A673 (cell line): ENCODE measurements at regions of chr2 and their contacts with region 1.

Region 1: GRCh38 chr2:176001916-176002687 is at the start of gene LNPK:
- DNase-seq: peak; percentile 95
- H3K4me3 ChIP-seq: peak within 1 kb of the TSS; percentile 67
- H3K27ac ChIP-seq: peak within 1 kb of the TSS; percentile 57
- H3K4me1 ChIP-seq: peaks cover 7% of the 10 kb centered on the region
- H3K27me3 ChIP-seq: no peaks in the 10 kb centered on the region
- CTCF ChIP-seq: no peak
- total RNA-seq, gene LNPK: 42.5 and 46.6 TPM in 2 replicates

Region 2: DNA sequence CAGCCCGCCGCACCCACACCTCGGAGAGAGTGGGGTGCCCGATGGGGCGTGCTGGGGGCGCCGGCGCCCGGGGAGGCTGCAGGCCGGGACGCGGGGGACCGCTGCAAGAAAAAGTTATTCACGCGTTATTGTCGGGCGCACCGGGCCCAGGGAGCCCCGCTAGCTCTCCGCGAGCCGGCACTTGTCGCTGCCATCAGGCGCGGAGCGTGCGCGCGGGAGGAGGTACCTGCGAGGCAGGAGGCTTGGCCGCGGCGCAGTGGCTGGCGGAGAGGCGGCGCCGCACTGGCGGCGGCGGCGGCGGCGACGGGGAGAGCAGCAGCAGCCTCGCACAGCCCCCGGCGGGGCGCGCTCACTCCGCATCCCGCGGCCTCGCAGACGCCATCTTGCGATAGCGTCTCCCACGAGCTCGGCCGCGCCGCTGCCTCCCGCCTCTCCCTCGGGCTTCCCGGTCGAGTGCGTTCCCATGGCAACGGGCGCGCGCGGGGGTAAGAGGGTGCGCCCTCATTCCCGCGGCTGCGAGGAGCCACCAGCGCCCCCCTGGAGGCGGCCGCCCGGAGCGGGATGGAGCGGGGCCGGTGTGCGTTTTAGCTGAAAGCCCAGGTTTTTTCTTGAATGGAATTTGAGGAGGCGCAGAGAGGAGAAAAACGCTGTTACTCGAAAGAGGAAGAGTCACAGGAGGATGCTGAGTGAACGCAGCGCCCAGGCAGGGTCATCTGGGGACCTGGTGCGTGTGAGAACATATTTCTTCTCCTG is 996.9 kb before region 1 on chr2 and contains the start of gene CHN1:
- CTCF ChIA-PET with region 1: no interaction called
- POLR2A ChIA-PET with region 1: interaction called, 11 read pairs
- intact Hi-C with region 1: no loop called
- DNase-seq: peak; percentile 83
- H3K4me3 ChIP-seq: peak within 1 kb of the TSS; percentile 46
- H3K27ac ChIP-seq: no peak within 1 kb of the TSS
- H3K4me1 ChIP-seq: peaks cover 1% of the 10 kb centered on the region
- H3K27me3 ChIP-seq: peaks cover 67% of the 10 kb centered on the region
- CTCF ChIP-seq: no peak
- total RNA-seq, gene CHN1: 11.3 and 19.1 TPM in 2 replicates